Ovary (tissue), 10 donors: ENCODE measurements at regions of chr6 and their contacts with region 1.

Region 1: GRCh38 chr6:11653028-11653583 is 115.6 kb downstream of the TMEM170B start:
- DNase-seq: peak; percentile 35 to 49 (median 46)
- H3K4me3 ChIP-seq: no peak overlapping the region
- H3K27ac ChIP-seq: no peak overlapping the region
- H3K4me1 ChIP-seq: peaks cover 16% of the 10 kb centered on the region
- H3K27me3 ChIP-seq: no peaks in the 10 kb centered on the region
- CTCF ChIP-seq: no peak
- EP300 ChIP-seq: no peak
- POLR2A ChIP-seq: no peak

Region 2: DNA sequence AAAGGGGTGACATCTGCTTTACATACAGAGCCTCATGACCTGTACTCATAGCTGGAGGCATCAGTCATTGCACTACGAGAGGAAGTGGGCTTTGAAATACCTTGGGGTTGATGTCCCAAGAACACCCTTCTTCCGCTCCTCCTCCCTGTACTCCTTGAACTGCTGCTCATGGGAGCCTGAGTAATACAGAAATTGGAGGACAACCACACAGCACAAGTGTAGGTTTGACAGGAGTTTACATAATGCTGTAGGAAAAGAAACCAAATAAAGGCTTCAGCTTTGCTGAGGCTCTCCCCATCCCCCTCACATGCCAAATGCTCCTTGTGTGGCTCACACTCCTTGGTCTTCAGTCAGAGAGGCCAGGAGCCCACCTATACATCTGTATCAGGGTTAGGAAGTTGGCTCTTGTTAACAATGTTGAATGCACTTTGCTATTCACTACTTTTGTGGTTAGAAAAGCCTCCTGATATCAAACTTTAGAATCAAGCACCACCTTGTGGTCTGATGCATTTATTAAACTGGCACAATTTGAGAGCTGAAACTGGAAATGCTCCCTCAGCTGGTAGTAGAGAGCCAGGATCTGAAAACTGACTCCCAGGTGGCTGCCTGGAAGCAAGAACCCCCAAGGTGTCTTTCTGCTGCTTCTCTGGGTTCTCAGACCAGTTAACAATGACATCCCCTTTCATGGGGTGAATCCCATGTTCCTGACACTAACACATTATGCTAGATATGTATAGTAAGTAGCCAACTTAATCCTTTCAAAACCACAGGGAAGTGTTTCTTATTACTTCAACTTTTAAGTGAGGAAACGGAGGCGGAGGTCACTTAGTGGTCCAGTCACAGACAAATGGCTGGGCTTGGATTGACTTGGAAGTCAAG is 580.8 kb after region 1 on chr6:
- intact Hi-C with region 1: loop called (anchors 5 to 10 kb)
- DNase-seq: peak in 1 of 5 donors; percentile 18
- H3K4me3 ChIP-seq: no peak overlapping the region
- H3K27ac ChIP-seq: no peak overlapping the region
- H3K4me1 ChIP-seq: no peaks in the 10 kb centered on the region
- H3K27me3 ChIP-seq: no peaks in the 10 kb centered on the region
- CTCF ChIP-seq: peak in 2 of 3 donors; percentile 48 to 70
- EP300 ChIP-seq: no peak
- POLR2A ChIP-seq: no peak